ENCODE measurements at regions of chr6 and their contacts with region 1.

Region 1: DNA sequence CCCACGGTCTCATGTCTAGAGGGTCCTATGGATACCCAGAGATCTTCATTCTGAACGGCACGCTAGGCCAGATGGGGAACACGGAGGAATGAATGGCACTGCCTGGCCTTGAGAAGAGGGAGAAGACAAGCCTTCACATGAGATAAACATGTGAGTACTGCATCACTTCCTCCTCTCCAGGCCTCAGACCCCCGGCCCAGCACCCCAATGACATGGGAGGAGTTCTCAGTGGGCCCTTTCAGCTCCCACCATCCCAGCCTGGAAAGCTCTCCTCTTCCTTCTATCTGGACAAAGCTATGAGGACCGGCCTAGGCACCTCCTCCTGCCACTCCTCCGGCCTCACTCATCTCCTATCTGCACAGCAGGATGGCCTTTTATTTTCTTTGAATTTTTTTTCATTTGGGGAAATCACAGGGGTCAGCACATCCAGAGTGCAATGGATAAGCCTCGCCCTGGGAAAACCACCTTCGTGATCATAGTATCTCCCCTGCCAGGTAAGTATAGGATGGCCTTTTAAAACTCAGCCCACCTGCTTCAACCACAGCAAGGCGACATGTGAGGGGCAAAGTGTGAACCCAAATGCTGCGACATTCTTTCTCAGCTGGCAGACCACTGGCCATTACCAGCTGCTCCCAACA is 39.2 kb upstream of the CDKN1A start:
- DNase-seq: no peak
- ATAC-seq: no peak
- H3K4me3 ChIP-seq: no peak overlapping the region
- H3K27ac ChIP-seq: no peak overlapping the region
- H3K4me1 ChIP-seq: peaks cover 7% of the 10 kb centered on the region
- H3K27me3 ChIP-seq: no peaks in the 10 kb centered on the region
- CTCF ChIP-seq: no peak

Region 2: DNA sequence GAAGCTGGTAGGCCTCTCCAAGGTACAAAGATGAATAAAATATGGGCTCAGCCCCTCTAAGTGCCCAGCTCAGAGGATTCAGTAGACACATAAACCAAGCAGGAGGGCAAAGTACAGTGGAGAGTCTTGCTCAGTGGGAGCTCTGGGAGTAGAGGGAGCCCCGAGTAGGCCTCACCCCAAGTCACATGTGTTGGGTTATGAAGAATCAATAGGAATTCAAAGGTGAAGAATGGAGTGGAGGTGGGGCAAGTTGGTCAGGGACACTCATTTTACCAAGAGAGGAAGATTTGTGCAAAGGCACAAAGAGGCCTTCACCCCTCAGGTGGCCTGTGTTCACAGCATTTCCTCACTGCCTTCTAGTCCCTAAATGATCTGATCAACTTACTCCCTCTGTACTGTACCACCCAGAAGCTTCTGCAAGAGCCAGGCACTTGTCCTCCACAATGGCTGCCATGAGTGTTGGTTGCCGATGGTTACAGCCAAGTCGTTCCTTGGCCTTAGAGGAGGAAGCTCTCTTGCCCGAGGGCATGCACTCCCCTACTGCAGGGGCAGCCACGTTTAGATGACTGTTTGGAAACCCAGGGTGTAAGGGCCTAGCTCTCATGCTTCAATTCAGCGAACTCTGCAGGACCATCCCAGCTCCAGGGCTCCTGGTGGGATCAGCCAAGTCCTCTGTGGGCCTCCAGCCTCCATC is 32.5 kb after region 1 on chr6:
- intact Hi-C with region 1: loop called in 1 of 2 experiments (anchors 5 kb)
- DNase-seq: no peak
- ATAC-seq: no peak
- H3K4me3 ChIP-seq: no peak overlapping the region
- H3K27ac ChIP-seq: no peak overlapping the region
- H3K4me1 ChIP-seq: peaks cover 21% of the 10 kb centered on the region
- H3K27me3 ChIP-seq: no peaks in the 10 kb centered on the region
- CTCF ChIP-seq: no peak

Region 3: GRCh38 chr6:36780442-36781177 is 141.3 kb after region 1 on chr6:
- intact Hi-C with region 1: no loop called
- DNase-seq: no peak
- ATAC-seq: no peak
- H3K4me3 ChIP-seq: no peak overlapping the region
- H3K27ac ChIP-seq: no peak overlapping the region
- H3K4me1 ChIP-seq: no peaks in the 10 kb centered on the region
- H3K27me3 ChIP-seq: peaks cover 0 to 3% (median 0%) of the 10 kb centered on the region in 3 donors
- CTCF ChIP-seq: no peak

Measured in psoas muscle (tissue), 8 donors.